ENCODE measurements at regions of chr13 and their contacts with region 1.

Region 1: GRCh38 chr13:21476893-21477472 is 17.9 kb upstream of the ZDHHC20 start:
- DNase-seq: peak; percentile 90
- ATAC-seq: peak; percentile 95
- H3K4me3 Mint-ChIP-seq: peak overlapping the region; percentile 79
- H3K27ac Mint-ChIP-seq: peak overlapping the region; percentile 79
- H3K4me1 Mint-ChIP-seq: peaks cover 7% of the 10 kb centered on the region
- H3K27me3 Mint-ChIP-seq: no peaks in the 10 kb centered on the region
- CTCF ChIP-seq: peak; percentile 92

Region 2: GRCh38 chr13:20940083-20940880 is 536.7 kb before region 1 on chr13:
- CTCF ChIA-PET with region 1: no interaction called
- POLR2A ChIA-PET with region 1: no interaction called
- intact Hi-C with region 1: loop called (anchors 5 kb)
- DNase-seq: no peak
- ATAC-seq: no peak
- H3K4me3 Mint-ChIP-seq: no peak overlapping the region
- H3K27ac Mint-ChIP-seq: no peak overlapping the region
- H3K4me1 Mint-ChIP-seq: no peaks in the 10 kb centered on the region
- H3K27me3 Mint-ChIP-seq: peaks cover 14% of the 10 kb centered on the region
- CTCF ChIP-seq: no peak

Region 3: DNA sequence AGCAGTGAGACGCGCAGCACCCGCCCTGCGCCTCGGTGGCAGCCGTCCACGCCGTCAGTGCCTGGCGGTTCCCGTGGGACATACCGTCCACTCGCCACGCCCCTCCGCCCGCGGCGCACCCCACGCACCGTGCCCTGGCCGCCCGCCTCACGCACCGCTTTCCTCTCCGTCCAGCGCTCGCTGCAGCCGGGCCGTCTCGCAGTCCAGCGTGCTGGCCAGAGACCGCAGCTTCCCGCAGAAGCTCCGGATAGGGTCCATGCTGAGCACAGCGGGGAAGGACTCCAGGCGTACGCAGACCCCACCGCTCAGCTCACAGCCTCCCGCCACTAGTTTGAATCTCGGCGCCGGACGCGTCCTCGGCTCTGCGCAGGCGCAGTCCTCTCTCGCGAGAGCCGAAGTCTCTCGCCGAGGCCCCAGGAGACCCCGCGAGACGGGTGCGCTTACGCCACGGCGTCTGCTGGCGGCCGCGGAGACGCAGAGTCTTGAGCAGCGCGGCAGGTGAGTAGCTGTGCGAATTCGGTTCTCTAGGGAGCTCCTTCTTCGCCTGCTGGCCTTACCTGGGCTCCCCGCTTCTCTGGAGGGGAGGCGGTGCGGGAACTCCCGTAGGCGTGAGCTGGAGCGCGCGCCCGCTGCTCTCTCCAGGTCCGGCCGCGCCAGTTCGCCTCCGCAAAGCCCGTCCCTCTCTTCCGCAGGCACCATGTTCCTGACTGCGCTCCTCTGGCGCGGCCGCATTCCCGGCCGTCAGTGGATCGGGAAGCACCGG is 300.6 kb before region 1 on chr13 and contains the starts of genes MRPL57 and SKA3:
- CTCF ChIA-PET with region 1: interaction called, 20 read pairs
- POLR2A ChIA-PET with region 1: interaction called, 5 read pairs
- intact Hi-C with region 1: no loop called
- DNase-seq: peak; percentile 92
- ATAC-seq: peak; percentile 95
- H3K4me3 Mint-ChIP-seq: peak within 1 kb of the TSS; percentile 98
- H3K27ac Mint-ChIP-seq: peak within 1 kb of the TSS; percentile 96
- H3K4me1 Mint-ChIP-seq: peaks cover 17% of the 10 kb centered on the region
- H3K27me3 Mint-ChIP-seq: no peaks in the 10 kb centered on the region
- CTCF ChIP-seq: peak; percentile 49
- total RNA-seq, gene MRPL57: 24.8 to 25.5 TPM
- total RNA-seq, gene SKA3: 39.5 to 41.5 TPM

Region 4: GRCh38 chr13:21287331-21287907 is 189.6 kb before region 1 on chr13:
- CTCF ChIA-PET with region 1: interaction called, 12 read pairs
- POLR2A ChIA-PET with region 1: no interaction called
- intact Hi-C with region 1: no loop called
- DNase-seq: no peak
- ATAC-seq: no peak
- H3K4me3 Mint-ChIP-seq: no peak overlapping the region
- H3K27ac Mint-ChIP-seq: no peak overlapping the region
- H3K4me1 Mint-ChIP-seq: no peaks in the 10 kb centered on the region
- H3K27me3 Mint-ChIP-seq: no peaks in the 10 kb centered on the region
- CTCF ChIP-seq: no peak

Region 5: DNA sequence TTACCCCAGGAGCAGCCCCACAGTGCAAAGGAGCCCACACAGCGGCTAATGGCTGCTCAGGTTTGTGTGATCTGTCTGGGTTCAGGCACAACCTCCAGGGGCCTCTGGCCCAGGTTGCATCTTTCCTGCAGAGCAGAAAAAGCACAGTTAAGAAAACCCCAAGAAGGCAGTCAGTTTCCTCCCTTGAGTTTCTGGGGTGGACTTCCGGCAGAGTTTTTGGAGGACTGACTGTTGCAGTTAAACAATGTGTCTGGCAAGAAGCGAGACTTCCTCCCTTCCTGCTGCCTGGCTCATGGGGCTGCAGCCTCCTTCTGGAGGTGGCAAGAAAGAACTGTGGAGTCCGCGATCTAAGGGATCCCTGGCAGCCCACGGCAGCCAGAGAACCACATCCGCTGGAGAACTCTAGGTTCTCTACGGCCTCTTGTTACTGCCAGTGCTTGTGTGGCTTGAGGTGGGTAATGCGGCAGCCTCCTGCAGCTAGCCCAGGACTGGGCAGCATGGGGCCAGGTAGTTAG is 132.3 kb before region 1 on chr13:
- CTCF ChIA-PET with region 1: interaction called, 10 read pairs
- POLR2A ChIA-PET with region 1: no interaction called
- intact Hi-C with region 1: no loop called
- DNase-seq: peak; percentile 57
- ATAC-seq: peak; percentile 82
- H3K4me3 Mint-ChIP-seq: peak overlapping the region; percentile 63
- H3K27ac Mint-ChIP-seq: peak overlapping the region; percentile 85
- H3K4me1 Mint-ChIP-seq: peaks cover 20% of the 10 kb centered on the region
- H3K27me3 Mint-ChIP-seq: no peaks in the 10 kb centered on the region
- CTCF ChIP-seq: no peak

Region 6: GRCh38 chr13:21465710-21466160 is 11.2 kb before region 1 on chr13:
- CTCF ChIA-PET with region 1: interaction called, 50 read pairs
- POLR2A ChIA-PET with region 1: interaction called, 3 read pairs
- intact Hi-C with region 1: no loop called
- DNase-seq: no peak
- ATAC-seq: no peak
- H3K4me3 Mint-ChIP-seq: no peak overlapping the region
- H3K27ac Mint-ChIP-seq: no peak overlapping the region
- H3K4me1 Mint-ChIP-seq: no peaks in the 10 kb centered on the region
- H3K27me3 Mint-ChIP-seq: no peaks in the 10 kb centered on the region
- CTCF ChIP-seq: no peak

Measured in activated CD8-positive, alpha-beta T cell treated with anti-CD3 and anti-CD28 coated beads for 36 hours (primary cell).